Natural killer cell (primary cell): ENCODE measurements at regions of chr14 and their contacts with region 1.

Region 1: DNA sequence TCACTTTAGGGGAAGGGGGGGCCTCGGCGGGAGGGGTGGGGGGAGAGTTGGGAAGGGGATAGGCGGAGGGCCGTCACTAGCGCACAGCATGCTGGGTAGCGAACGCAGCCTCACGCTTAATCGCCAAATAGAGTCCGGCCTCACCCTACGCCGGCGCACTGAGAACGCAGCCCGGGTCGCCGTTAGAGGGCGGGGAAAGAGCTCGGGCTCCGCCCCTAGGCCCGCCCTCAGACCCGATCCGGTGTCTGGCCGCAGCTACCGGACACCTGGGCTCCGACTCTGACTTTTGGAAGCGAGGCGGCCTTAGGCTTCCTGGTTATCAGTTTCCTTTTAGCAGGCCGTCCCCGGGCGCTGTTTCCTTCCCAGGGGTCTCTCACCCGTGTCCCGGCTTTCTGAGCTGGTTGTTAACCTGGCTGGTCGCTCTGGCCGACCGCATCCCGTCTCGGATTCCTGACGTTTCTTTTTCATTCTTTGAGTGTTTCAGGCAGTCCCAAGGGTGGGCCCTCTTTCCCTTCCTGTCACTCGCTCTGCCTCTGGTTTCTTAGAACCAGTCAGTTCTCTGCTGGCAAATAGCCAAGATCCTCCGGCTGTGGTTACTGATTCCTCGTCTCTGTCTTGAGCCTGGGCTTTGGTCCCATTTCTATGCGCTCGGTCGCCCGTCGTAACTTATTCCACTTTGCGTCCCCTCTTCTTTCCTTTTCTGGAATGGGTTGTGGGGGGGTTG is 378 bp upstream of the STRN3 start:
- DNase-seq: peak; percentile 89 to 95
- ATAC-seq: peak; percentile 92 to 99 (median 95)
- H3K4me3 ChIP-seq: peak overlapping the region; percentile 60
- H3K4me3 Mint-ChIP-seq: peak overlapping the region; percentile 95
- H3K27ac ChIP-seq: peak overlapping the region; percentile 92
- H3K27ac Mint-ChIP-seq: peak overlapping the region; percentile 95 to 96
- H3K4me1 ChIP-seq: peaks cover 6% of the 10 kb centered on the region
- H3K4me1 Mint-ChIP-seq: peaks cover 31 to 36% of the 10 kb centered on the region in 2 donors
- H3K27me3 ChIP-seq: no peaks in the 10 kb centered on the region
- H3K27me3 Mint-ChIP-seq: no peaks in the 10 kb centered on the region
- CTCF ChIP-seq: no peak

Region 2: GRCh38 chr14:31127690-31128089 is 101.1 kb after region 1 on chr14:
- intact Hi-C with region 1: loop called (anchors 1 kb)
- DNase-seq: peak in 1 of 2 donors; percentile 88
- ATAC-seq: peak; percentile 90 to 96 (median 93)
- H3K4me3 ChIP-seq: no peak overlapping the region
- H3K4me3 Mint-ChIP-seq: peak overlapping the region; percentile 66
- H3K27ac ChIP-seq: peak overlapping the region; percentile 74
- H3K27ac Mint-ChIP-seq: peak overlapping the region; percentile 79 to 86
- H3K4me1 ChIP-seq: peaks cover 31% of the 10 kb centered on the region
- H3K4me1 Mint-ChIP-seq: peaks cover 29 to 31% of the 10 kb centered on the region in 2 donors
- H3K27me3 ChIP-seq: no peaks in the 10 kb centered on the region
- H3K27me3 Mint-ChIP-seq: peaks cover 0 to 2% of the 10 kb centered on the region in 2 donors
- CTCF ChIP-seq: no peak

Region 3: GRCh38 chr14:31263485-31264133 is 237.1 kb after region 1 on chr14:
- intact Hi-C with region 1: no loop called
- DNase-seq: no peak
- ATAC-seq: no peak
- H3K4me3 ChIP-seq: no peak overlapping the region
- H3K4me3 Mint-ChIP-seq: no peak overlapping the region
- H3K27ac ChIP-seq: no peak overlapping the region
- H3K27ac Mint-ChIP-seq: no peak overlapping the region
- H3K4me1 ChIP-seq: no peaks in the 10 kb centered on the region
- H3K4me1 Mint-ChIP-seq: peaks cover 0 to 5% of the 10 kb centered on the region in 2 donors
- H3K27me3 ChIP-seq: no peaks in the 10 kb centered on the region
- H3K27me3 Mint-ChIP-seq: peaks cover 5 to 15% of the 10 kb centered on the region in 2 donors
- CTCF ChIP-seq: no peak